Activated CD8-positive, alpha-beta T cell treated with anti-CD3 and anti-CD28 coated beads for 36 hours (primary cell): ENCODE measurements at regions of chr16 and their contacts with region 1.

Region 1: GRCh38 chr16:67561824-67562525 is 351 bp upstream of the CTCF start:
- DNase-seq: peak; percentile 98
- ATAC-seq: peak; percentile 88
- H3K4me3 Mint-ChIP-seq: peak overlapping the region; percentile 82
- H3K27ac Mint-ChIP-seq: peak overlapping the region; percentile 91
- H3K4me1 Mint-ChIP-seq: peaks cover 44% of the 10 kb centered on the region
- H3K27me3 Mint-ChIP-seq: no peaks in the 10 kb centered on the region
- CTCF ChIP-seq: no peak

Region 2: DNA sequence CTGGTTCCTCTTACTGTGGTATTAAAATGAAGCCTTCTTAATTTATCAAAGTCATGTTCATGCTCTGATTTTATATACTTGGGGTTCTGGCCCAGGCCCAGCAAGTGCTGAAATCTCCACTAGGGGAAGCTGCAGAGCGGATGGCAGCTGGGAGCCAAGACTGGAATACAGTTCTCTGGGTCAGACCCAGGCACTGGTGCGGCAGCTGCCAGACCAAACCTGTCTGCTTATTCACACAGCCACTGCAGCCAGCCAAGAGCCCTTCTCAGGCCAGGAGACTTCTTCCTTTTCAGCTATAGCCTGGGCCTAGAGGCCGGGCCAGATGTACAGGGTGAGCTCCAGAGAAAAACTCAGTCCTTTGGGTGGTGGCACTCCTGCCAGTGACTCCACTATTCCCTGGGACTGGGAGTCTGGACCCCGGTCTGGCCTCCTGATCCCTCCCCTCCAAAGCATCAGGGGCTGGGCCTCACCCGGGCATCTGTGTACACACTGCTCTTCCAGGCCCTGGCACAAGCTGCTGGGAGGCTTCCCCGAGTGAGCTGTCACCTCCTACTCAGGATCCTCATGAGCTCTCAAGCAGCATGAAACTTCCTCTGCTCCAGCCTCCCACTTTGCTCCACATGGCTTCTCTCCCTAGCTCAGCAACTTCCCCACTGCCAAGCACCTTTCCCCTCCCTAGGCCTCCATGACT is 105.4 kb before region 1 on chr16:
- CTCF ChIA-PET with region 1: no interaction called
- POLR2A ChIA-PET with region 1: no interaction called
- intact Hi-C with region 1: no loop called
- DNase-seq: no peak
- ATAC-seq: no peak
- H3K4me3 Mint-ChIP-seq: no peak overlapping the region
- H3K27ac Mint-ChIP-seq: no peak overlapping the region
- H3K4me1 Mint-ChIP-seq: peaks cover 8% of the 10 kb centered on the region
- H3K27me3 Mint-ChIP-seq: no peaks in the 10 kb centered on the region
- CTCF ChIP-seq: peak; percentile 24

Region 3: DNA sequence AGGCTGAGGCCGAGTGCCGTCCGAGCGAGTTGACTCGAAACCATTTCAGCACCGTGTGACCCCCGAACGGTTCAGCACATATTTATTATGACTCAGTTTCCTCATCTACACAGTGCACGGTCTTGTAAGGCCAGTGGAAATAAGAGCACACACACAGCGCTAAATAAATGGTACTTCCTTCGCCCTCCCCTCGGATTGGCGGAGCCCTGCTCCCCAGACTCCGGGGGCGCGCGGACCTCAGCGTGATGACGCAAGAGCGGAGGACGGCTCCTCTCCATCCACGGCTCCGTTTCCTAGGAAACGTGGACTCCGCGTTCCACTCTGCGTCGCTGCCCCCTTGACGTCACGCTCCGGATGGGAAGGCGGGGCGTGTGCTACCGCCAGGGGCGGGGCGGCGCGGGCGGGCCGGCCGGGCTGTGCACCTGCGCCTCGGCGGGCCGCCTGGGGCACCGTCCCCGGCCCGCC is 98.6 kb after region 1 on chr16 and contains the start of gene PARD6A:
- CTCF ChIA-PET with region 1: interaction called, 24 read pairs
- POLR2A ChIA-PET with region 1: interaction called, 13 read pairs
- intact Hi-C with region 1: no loop called
- DNase-seq: peak; percentile 98
- ATAC-seq: peak; percentile 82
- H3K4me3 Mint-ChIP-seq: peak within 1 kb of the TSS; percentile 90
- H3K27ac Mint-ChIP-seq: peak within 1 kb of the TSS; percentile 92
- H3K4me1 Mint-ChIP-seq: peaks cover 18% of the 10 kb centered on the region
- H3K27me3 Mint-ChIP-seq: no peaks in the 10 kb centered on the region
- CTCF ChIP-seq: no peak
- total RNA-seq, gene PARD6A: 6.3 to 7.2 TPM

Region 4: GRCh38 chr16:67667817-67668494 is 106.0 kb after region 1 on chr16:
- CTCF ChIA-PET with region 1: interaction called, 24 read pairs
- POLR2A ChIA-PET with region 1: interaction called, 6 read pairs
- intact Hi-C with region 1: no loop called
- DNase-seq: peak; percentile 92
- ATAC-seq: peak; percentile 92
- H3K4me3 Mint-ChIP-seq: peak overlapping the region; percentile 80
- H3K27ac Mint-ChIP-seq: no peak overlapping the region
- H3K4me1 Mint-ChIP-seq: peaks cover 11% of the 10 kb centered on the region
- H3K27me3 Mint-ChIP-seq: no peaks in the 10 kb centered on the region
- CTCF ChIP-seq: peak; percentile 73